ENCODE measurements at regions of chr2 and their contacts with region 1.

Region 1: DNA sequence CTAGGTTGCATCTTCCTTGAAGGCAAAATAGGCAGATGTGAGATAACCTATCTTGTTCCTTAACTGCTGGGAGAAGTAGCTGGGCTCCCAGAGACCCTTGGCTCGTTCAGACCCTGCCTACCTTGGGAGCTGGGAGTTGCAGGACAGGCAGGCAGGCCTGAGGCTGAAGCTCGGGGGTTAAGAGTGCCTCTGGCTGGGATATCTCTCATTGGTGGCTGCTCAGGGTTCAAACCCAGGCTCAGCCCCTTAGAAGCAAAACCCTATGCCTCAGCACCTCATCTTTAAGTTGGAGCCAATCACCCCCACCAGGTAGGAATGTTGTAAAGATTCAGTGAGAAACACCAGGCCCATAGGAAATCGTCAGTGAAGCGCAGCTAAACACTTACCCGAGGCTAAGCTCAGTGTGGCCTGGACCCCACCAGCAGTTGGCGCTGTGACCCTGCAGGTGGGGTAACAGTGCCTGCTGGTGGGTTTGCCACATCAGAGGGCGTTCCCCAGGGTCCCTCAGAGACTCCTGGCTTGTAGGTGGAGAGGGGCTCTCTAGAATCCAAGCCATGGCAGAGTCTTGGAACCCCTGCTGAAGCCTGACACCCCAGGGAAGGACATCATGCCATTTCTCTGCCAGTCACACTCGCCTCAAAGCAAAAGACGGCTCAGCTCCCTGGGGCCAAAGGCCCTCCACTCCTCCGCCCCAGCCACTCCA is 54.6 kb upstream of the GPR17 start:
- DNase-seq: peak; percentile 67 to 77
- ATAC-seq: peak; percentile 82 to 94 (median 87)
- H3K4me3 ChIP-seq: no peak overlapping the region
- H3K27ac ChIP-seq: no peak overlapping the region
- H3K4me1 ChIP-seq: no peaks in the 10 kb centered on the region
- H3K27me3 ChIP-seq: no peaks in the 10 kb centered on the region
- CTCF ChIP-seq: peak; percentile 84

Region 2: DNA sequence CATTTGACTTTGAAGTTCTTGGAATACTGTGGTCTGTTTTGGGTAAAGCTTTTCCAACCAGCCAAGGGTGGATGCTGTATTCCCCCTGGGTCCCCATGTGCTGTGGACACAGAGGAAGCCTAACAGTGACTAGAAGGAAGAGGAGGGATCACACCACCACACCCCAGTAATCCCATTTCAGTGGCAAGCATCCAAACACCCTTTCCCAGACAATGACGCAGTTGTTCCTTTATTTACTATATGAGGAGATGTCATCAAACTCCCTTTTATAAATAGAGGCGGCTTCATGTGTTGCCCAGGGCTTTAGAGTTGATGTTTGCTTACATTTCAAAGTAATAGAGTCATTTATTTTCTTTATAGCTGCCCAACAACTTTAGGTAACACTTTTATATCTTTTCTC is 1894.8 kb before region 1 on chr2:
- intact Hi-C with region 1: no loop called
- DNase-seq: no peak
- ATAC-seq: no peak
- H3K4me3 ChIP-seq: no peak overlapping the region
- H3K27ac ChIP-seq: no peak overlapping the region
- H3K4me1 ChIP-seq: no peaks in the 10 kb centered on the region
- H3K27me3 ChIP-seq: no peaks in the 10 kb centered on the region
- CTCF ChIP-seq: no peak

Region 3: GRCh38 chr2:127695491-127696472 is 104.4 kb after region 1 on chr2:
- intact Hi-C with region 1: loop called in 1 of 2 experiments (anchors 5 kb)
- DNase-seq: peak; percentile 70 to 84
- ATAC-seq: peak; percentile 48 to 74 (median 64)
- H3K4me3 ChIP-seq: peak overlapping the region; percentile 61
- H3K27ac ChIP-seq: no peak overlapping the region
- H3K4me1 ChIP-seq: peaks cover 5% of the 10 kb centered on the region
- H3K27me3 ChIP-seq: no peaks in the 10 kb centered on the region
- CTCF ChIP-seq: peak; percentile 50

Region 4: DNA sequence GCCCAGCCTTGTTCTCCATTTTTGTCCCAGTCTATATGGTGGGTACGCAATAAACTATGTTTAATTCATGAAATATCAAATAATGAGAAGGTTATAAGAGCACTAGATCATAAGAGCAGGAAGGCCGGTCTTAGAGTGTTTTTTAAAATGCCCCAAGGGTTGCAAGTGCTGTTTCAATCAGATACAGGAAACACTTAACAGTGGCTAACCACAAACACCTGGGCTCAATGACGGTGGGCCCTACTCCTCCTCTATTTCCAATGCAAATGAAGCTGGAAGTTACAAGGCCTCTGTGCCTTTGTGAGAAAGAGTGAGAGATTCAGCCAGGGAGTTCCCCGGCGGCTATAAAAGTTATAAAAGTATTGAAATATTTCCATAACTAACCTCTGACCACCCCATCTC is 238.5 kb after region 1 on chr2:
- intact Hi-C with region 1: loop called in 1 of 2 experiments (anchors 10 kb)
- DNase-seq: no peak
- ATAC-seq: no peak
- H3K4me3 ChIP-seq: no peak overlapping the region
- H3K27ac ChIP-seq: no peak overlapping the region
- H3K4me1 ChIP-seq: no peaks in the 10 kb centered on the region
- H3K27me3 ChIP-seq: no peaks in the 10 kb centered on the region
- CTCF ChIP-seq: no peak

Measured in psoas muscle (tissue), 8 donors.